ENCODE measurements at regions of chr9 and their contacts with region 1.

Region 1: DNA sequence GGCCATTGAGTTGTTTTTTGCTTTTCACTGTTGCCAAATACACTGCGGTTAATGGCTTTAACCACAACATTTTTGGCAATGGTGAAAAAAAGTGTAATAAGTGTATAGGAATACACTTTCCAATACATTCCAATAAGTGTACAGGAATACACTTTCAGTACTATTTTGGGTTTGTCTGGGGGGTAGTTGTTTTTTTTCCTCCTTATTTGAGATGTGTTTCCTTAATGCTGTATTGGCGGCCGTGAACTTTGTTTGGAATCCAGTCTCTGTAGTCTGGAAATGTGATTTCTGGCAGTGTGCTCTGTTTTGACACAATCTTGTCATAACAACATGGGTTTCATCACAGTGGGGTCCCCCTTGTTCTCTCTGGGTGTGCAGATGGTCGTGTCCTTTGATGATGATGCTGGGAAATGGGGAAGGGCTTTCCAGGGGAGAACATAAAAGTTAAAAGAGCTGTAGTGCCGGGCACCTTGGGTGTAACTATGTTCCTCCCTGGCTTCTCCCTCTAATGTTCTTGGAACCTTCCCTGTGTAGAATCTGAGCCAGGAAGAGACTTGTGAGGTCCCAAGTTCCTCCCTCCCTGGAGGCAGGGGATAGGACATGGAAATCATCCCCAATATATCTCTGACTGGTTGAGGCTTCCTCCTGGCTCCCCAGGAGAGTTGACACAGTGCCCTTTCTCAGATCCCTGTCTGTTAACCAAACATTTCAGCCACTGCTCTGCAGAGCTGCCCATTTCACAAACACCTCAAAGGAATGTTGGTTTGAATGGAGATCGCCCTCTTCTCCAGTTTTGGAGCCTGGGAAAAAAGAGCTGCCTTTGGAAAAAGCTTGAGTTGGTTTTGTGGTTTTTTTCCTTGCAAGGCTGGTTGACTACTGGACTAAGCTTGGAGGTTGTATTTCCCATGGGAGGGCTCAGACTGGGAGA is 44.8 kb downstream of the RCL1 start:
- DNase-seq: peak; percentile 81
- ATAC-seq: peak; percentile 54
- H3K4me3 ChIP-seq: peak overlapping the region in 1 of 3 experiments; percentile 31; a peak in 2 of 6 replicates
- H3K27ac ChIP-seq: peak overlapping the region; percentile 75
- H3K4me1 ChIP-seq: peaks cover 100% of the 10 kb centered on the region
- H3K27me3 ChIP-seq: no peaks in the 10 kb centered on the region
- CTCF ChIP-seq: no peak
- EP300 ChIP-seq: 0 out of 4 replicates have a peak, but pooled peaks of 1 of the 2 experiments have one; percentile 33
- POLR2A ChIP-seq: 0 out of 4 replicates have a peak, but pooled peaks of 1 of the 2 experiments have one; percentile 23
- RAD21 ChIP-seq: no peak

Region 2: GRCh38 chr9:4862506-4863250 is 25.2 kb after region 1 on chr9:
- CTCF ChIA-PET with region 1: no interaction called
- POLR2A ChIA-PET with region 1: interaction called, 11 read pairs
- in situ Hi-C with region 1: no loop called
- intact Hi-C with region 1: loop called (anchors 2 kb)
- DNase-seq: no peak
- ATAC-seq: peak; percentile 23
- H3K4me3 ChIP-seq: no peak overlapping the region
- H3K27ac ChIP-seq: peak overlapping the region; percentile 53
- H3K4me1 ChIP-seq: peaks cover 29% of the 10 kb centered on the region
- H3K27me3 ChIP-seq: no peaks in the 10 kb centered on the region
- CTCF ChIP-seq: no peak
- EP300 ChIP-seq: no peak
- POLR2A ChIP-seq: no peak
- RAD21 ChIP-seq: no peak

Region 3: GRCh38 chr9:4921449-4921848 is 83.9 kb after region 1 on chr9:
- CTCF ChIA-PET with region 1: no interaction called
- POLR2A ChIA-PET with region 1: no interaction called
- in situ Hi-C with region 1: no loop called
- intact Hi-C with region 1: no loop called
- DNase-seq: no peak
- ATAC-seq: no peak
- H3K4me3 ChIP-seq: no peak overlapping the region
- H3K27ac ChIP-seq: no peak overlapping the region
- H3K4me1 ChIP-seq: no peaks in the 10 kb centered on the region
- H3K27me3 ChIP-seq: no peaks in the 10 kb centered on the region
- CTCF ChIP-seq: no peak
- EP300 ChIP-seq: no peak
- POLR2A ChIP-seq: no peak
- RAD21 ChIP-seq: no peak

Region 4: GRCh38 chr9:4955836-4956235 is 118.3 kb after region 1 on chr9:
- CTCF ChIA-PET with region 1: no interaction called
- POLR2A ChIA-PET with region 1: no interaction called
- in situ Hi-C with region 1: no loop called
- intact Hi-C with region 1: no loop called
- DNase-seq: no peak
- ATAC-seq: no peak
- H3K4me3 ChIP-seq: no peak overlapping the region
- H3K27ac ChIP-seq: no peak overlapping the region
- H3K4me1 ChIP-seq: no peaks in the 10 kb centered on the region
- H3K27me3 ChIP-seq: no peaks in the 10 kb centered on the region
- CTCF ChIP-seq: no peak
- EP300 ChIP-seq: no peak
- POLR2A ChIP-seq: no peak
- RAD21 ChIP-seq: no peak

Measured in HepG2 (cell line).